ENCODE measurements at regions of chr15 and their contacts with region 1.

Region 1: DNA sequence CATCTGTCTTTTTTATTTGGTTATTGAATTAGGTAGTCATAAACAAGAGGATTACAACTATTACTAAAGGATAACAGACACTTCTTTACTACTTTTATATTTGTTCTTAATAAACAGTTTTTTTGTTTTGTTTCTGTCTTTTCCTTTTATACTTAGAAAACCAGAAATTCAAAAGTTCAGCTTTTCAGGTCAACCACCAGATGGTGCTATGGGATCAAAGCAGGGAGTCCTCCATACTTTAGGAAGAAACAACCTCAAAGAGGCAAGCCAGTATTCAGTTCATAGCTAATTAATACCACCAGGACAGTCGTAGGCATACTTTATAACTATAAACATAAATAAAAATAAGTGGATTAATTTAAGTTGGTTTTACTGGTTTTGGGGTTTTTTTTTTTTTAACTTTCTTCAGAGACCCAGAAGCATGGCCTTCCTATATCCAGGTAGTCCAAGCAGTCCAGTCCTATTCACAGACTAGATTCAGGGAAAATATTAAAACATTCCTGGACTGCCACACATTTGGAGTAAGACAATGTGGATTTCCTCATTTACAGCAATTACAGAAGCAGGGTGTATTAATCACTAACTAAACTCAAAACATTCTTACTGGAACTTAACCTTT is 16.0 kb upstream of the EID1 start:
- DNase-seq: peak; percentile 82
- ATAC-seq: peak; percentile 28; the same call in 1 of the 2 replicates
- H3K4me3 ChIP-seq: no peak overlapping the region
- H3K27ac ChIP-seq: no peak overlapping the region
- H3K4me1 ChIP-seq: peaks cover 24% of the 10 kb centered on the region
- H3K27me3 ChIP-seq: no peaks in the 10 kb centered on the region
- CTCF ChIP-seq: peak; percentile 96
- POLR2A ChIP-seq: no peak
- RAD21 ChIP-seq: peak; percentile 99

Region 2: DNA sequence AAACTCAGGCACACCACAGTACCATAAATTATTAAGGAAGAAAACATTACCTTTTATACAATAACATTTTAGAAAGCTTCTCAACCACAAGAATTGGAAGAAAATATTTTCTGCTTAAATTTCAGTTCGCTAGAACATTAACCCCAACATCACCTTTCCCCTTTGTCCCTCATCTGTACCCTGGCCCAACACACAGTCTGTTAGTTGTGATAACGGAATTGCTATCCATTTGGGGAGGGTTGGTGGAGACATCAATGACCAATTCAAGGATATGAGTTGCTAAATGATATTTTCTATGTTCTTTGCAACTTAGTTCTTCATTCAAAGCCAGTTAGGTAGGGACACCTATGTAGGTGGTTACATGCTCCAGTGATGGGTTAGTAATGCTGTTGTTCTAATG is 21.8 kb after region 1 on chr15:
- CTCF ChIA-PET with region 1: no interaction called
- POLR2A ChIA-PET with region 1: no interaction called
- dilution Hi-C with region 1: no loop called
- in situ Hi-C with region 1: no loop called
- intact Hi-C with region 1: no loop called
- DNase-seq: no peak
- ATAC-seq: no peak
- H3K4me3 ChIP-seq: no peak overlapping the region
- H3K27ac ChIP-seq: no peak overlapping the region
- H3K4me1 ChIP-seq: peaks cover 9% of the 10 kb centered on the region; the same call in 1 of the 2 replicates
- H3K27me3 ChIP-seq: no peaks in the 10 kb centered on the region
- CTCF ChIP-seq: no peak
- POLR2A ChIP-seq: no peak
- RAD21 ChIP-seq: no peak

Region 3: GRCh38 chr15:49145651-49146609 is 284.0 kb after region 1 on chr15:
- CTCF ChIA-PET with region 1: interaction called, 5 read pairs
- POLR2A ChIA-PET with region 1: no interaction called
- dilution Hi-C with region 1: no loop called
- in situ Hi-C with region 1: loop called (anchors 5 kb)
- intact Hi-C with region 1: loop called (anchors 1 kb)
- DNase-seq: peak; percentile 73
- ATAC-seq: peak; percentile 64
- H3K4me3 ChIP-seq: no peak overlapping the region
- H3K27ac ChIP-seq: no peak overlapping the region
- H3K4me1 ChIP-seq: peaks cover 1% of the 10 kb centered on the region; the same call in 1 of the 2 replicates
- H3K27me3 ChIP-seq: no peaks in the 10 kb centered on the region
- CTCF ChIP-seq: peak; percentile 74
- POLR2A ChIP-seq: no peak
- RAD21 ChIP-seq: peak; percentile 70

Region 4: DNA sequence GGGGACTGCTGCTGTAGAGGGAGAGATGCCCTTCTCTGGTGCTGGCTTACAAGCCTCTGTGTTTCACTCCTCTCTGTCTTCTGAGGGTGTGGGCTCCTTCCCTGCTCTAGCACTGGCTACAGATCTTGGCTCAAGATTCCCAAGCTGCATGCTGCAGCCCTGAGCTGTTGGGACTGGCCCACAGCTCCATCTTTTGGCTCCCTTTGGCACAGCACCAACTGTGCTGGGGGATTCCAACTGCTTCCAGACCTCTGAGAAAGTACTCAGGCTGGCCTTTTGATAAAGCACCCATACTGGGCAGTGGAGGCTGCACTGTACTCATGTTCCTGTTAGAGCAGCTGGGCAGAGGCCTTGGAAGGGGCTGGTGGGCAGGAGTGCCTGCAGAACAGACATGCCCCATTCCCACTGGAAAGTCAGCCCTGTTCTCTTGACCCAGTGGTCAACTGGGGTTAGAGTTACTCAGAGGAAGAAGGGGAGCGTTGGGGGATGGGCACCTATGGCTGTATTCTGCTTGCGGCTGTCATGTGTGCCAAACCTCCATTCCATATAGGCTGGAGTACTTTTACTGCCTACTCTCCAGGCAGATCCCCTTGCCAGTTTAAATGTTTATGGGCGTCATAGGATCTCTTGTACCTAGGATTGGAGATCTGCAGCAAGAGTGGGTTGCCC is 363.8 kb after region 1 on chr15:
- CTCF ChIA-PET with region 1: no interaction called
- POLR2A ChIA-PET with region 1: no interaction called
- dilution Hi-C with region 1: no loop called
- in situ Hi-C with region 1: loop called (anchors 10 kb)
- intact Hi-C with region 1: no loop called
- DNase-seq: peak; percentile 60
- ATAC-seq: peak; percentile 83
- H3K4me3 ChIP-seq: no peak overlapping the region
- H3K27ac ChIP-seq: no peak overlapping the region
- H3K4me1 ChIP-seq: no peaks in the 10 kb centered on the region
- H3K27me3 ChIP-seq: no peaks in the 10 kb centered on the region
- CTCF ChIP-seq: peak; percentile 37
- POLR2A ChIP-seq: no peak
- RAD21 ChIP-seq: peak; percentile 43

Region 5: DNA sequence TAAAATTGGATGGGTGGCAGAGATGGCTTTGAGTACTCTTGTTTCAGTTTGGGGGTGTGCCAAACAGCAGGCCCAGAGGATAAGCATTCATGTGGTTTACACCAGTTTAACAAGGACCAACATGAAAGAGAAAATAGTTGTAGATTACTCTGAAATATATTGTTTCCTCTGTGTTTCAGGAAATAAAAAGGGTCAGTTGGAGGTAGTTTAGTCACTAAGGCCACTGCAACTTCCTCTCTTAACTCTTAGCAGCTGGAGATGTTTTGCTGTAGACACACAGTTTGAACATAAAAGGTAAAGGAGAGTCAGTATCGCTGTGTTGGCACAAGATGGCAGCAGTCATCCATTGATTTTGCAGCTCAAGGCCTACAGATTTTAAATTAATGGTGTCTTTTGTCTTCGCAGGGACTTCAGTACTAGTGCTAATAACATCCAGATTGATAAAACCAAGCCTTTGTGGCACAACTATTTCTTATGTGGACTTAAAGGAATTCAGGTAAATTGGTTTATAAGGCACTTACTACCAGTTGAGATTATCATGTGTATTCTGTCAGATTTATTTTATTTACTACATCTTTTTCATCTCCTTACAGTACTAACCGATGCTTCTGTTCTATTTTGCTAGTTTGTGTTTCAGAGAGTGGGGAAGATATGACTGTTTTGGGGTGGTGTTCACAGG is 373.7 kb after region 1 on chr15:
- CTCF ChIA-PET with region 1: interaction called, 5 read pairs
- POLR2A ChIA-PET with region 1: no interaction called
- dilution Hi-C with region 1: no loop called
- in situ Hi-C with region 1: no loop called
- intact Hi-C with region 1: loop called (anchors 2 kb)
- DNase-seq: peak; percentile 92
- ATAC-seq: peak; percentile 88
- H3K4me3 ChIP-seq: no peak overlapping the region
- H3K27ac ChIP-seq: peak overlapping the region; percentile 70; the same call in 1 of the 2 replicates
- H3K4me1 ChIP-seq: peaks cover 3% of the 10 kb centered on the region
- H3K27me3 ChIP-seq: no peaks in the 10 kb centered on the region
- CTCF ChIP-seq: peak; percentile 91
- POLR2A ChIP-seq: no peak
- RAD21 ChIP-seq: peak; percentile 94

Region 6: GRCh38 chr15:50315814-50316630 is 1454.1 kb after region 1 on chr15:
- CTCF ChIA-PET with region 1: interaction called, 3 read pairs
- POLR2A ChIA-PET with region 1: no interaction called
- dilution Hi-C with region 1: no loop called
- in situ Hi-C with region 1: no loop called
- intact Hi-C with region 1: loop called (anchors 10 kb)
- DNase-seq: peak; percentile 68
- ATAC-seq: peak; percentile 81
- H3K4me3 ChIP-seq: no peak overlapping the region
- H3K27ac ChIP-seq: no peak overlapping the region
- H3K4me1 ChIP-seq: peaks cover 2% of the 10 kb centered on the region; the same call in 1 of the 2 replicates
- H3K27me3 ChIP-seq: no peaks in the 10 kb centered on the region
- CTCF ChIP-seq: peak; percentile 71
- POLR2A ChIP-seq: no peak
- RAD21 ChIP-seq: peak; percentile 77